Breast epithelium (tissue), 4 donors: ENCODE measurements at regions of chr6 and their contacts with region 1.

Region 1: GRCh38 chr6:25880601-25881000 is 6.6 kb upstream of the SLC17A3 start:
- DNase-seq: no peak
- H3K4me3 ChIP-seq: no peak overlapping the region
- H3K27ac ChIP-seq: no peak overlapping the region
- H3K4me1 ChIP-seq: no peaks in the 10 kb centered on the region
- H3K27me3 ChIP-seq: no peaks in the 10 kb centered on the region
- CTCF ChIP-seq: no peak
- POLR2A ChIP-seq: no peak

Region 2: DNA sequence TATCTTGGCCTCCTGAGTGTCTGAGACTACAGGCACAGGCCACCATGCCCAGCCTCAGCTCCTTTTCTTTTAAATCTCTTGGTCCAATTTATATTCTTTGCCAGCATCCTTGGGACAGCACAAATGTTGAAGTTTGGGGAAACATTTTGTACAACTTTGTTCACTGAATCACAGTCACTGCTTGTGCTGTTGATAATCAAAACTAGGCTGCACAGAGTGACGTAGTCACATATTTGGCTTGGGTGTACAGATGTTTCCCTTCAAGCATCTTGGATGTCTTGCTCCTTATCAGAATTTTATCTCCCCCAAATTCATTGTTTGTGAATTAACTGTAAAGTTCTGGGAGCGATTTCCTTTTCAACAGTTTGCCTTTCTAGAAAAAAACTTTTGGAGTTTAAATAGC is 583.6 kb before region 1 on chr6:
- intact Hi-C with region 1: no loop called
- DNase-seq: no peak
- H3K4me3 ChIP-seq: no peak overlapping the region
- H3K27ac ChIP-seq: peak overlapping the region; percentile 70 to 82
- H3K4me1 ChIP-seq: peaks cover 0 to 12% of the 10 kb centered on the region in 2 donors
- H3K27me3 ChIP-seq: no peaks in the 10 kb centered on the region
- CTCF ChIP-seq: no peak
- POLR2A ChIP-seq: no peak

Region 3: GRCh38 chr6:25866011-25866410 is 14.6 kb before region 1 on chr6:
- intact Hi-C with region 1: loop called (anchors 2 kb)
- DNase-seq: no peak
- H3K4me3 ChIP-seq: no peak overlapping the region
- H3K27ac ChIP-seq: no peak overlapping the region
- H3K4me1 ChIP-seq: no peaks in the 10 kb centered on the region
- H3K27me3 ChIP-seq: no peaks in the 10 kb centered on the region
- CTCF ChIP-seq: no peak
- POLR2A ChIP-seq: no peak